A549 (cell line): ENCODE measurements at regions of chr1 and their contacts with region 1.

Region 1: GRCh38 chr1:153532769-153533599 is 2.8 kb downstream of the S100A6 start:
- DNase-seq: peak; percentile 91 to 93
- ATAC-seq: peak; percentile 36 to 63
- H3K4me3 ChIP-seq: peak overlapping the region; percentile 68
- H3K27ac ChIP-seq: peak overlapping the region; percentile 98 to 100
- H3K4me1 ChIP-seq: peaks cover 29% of the 10 kb centered on the region
- CTCF ChIP-seq: peak; percentile 92
- EP300 ChIP-seq: no peak
- POLR2A ChIP-seq: peak; percentile 40
- RAD21 ChIP-seq: peak; percentile 87 to 91

Region 2: DNA sequence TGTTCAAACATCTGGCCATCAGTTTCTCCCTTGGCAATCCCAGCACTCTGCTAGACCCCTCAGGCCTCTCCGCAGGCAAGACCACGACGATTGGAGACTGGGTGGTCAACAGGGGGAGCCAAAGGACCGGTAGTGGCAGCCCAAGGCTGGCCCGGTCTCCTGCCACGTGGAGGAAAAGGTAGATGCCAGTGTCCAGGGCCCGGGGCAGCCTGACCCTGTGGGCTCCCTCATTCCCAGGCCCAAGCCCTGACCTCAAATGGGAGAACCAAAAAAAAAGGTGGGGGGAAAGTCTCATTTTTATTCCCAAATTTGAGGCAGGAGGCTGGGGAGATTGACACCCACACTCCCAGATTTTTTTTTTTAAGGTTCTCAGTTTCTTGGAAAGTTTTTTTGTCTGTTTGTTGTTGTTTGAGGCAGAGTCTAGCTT is 22.0 kb before region 1 on chr1:
- CTCF ChIA-PET with region 1: interaction called, 170 read pairs
- POLR2A ChIA-PET with region 1: interaction called, 3 read pairs
- DNase-seq: peak; percentile 84 to 88
- ATAC-seq: peak; percentile 73 to 85
- H3K4me3 ChIP-seq: no peak overlapping the region
- H3K27ac ChIP-seq: peak overlapping the region; percentile 72 to 87
- H3K4me1 ChIP-seq: peaks cover 43% of the 10 kb centered on the region
- CTCF ChIP-seq: peak; percentile 94
- EP300 ChIP-seq: no peak
- POLR2A ChIP-seq: no peak
- RAD21 ChIP-seq: peak; percentile 99 to 100

Region 3: DNA sequence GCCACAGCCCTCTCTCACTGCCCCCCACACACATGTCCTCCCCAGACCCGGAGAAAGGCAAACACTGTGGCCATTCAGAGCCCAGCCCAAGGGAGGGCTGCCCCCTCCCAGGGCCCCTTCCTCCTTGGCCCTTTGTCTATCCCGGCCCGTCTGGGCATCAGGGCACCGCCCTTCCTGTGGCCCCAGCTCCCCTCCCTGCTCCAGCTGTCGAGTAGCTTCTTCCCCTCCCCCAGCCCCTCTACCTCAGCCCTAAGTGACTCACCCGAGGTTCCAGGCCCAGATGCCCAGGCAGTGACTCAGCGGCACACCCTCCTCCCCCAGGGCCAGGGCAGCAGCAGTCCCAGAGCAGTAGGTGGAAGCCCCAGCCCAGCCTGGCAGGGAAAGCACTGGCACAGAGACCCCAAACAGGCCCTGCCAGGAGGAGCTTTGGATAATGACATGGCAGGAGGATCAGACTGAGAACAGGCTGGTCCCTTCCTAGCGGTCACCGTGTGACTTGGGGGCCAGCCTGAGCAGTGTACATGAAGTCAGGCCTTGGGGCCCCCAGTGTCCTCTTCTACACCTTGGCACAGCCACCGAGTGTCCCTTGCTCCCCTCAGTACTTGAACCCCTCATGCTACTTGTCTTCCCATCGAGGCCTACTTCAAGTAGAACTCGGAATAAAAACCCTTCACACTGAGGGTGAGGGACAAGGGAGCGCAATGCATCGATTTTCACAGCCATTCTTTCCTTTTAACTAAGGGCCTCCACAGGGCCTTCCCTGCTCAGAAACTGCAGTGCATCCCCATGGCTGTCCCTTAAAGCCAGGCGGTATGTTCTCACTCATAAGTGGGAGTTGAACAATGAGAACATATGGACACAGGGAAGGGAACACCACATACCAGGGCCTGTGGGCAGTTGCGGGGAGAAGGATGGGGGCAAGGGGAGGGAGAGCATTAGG is 33.7 kb after region 1 on chr1:
- CTCF ChIA-PET with region 1: interaction called, 471 read pairs
- POLR2A ChIA-PET with region 1: interaction called, 102 read pairs
- DNase-seq: peak; percentile 99
- ATAC-seq: peak; percentile 82 to 89
- H3K4me3 ChIP-seq: peak overlapping the region; percentile 15; the same call in 1 of the 3 replicates
- H3K27ac ChIP-seq: peak overlapping the region; percentile 97 to 100
- H3K4me1 ChIP-seq: peaks cover 57% of the 10 kb centered on the region
- CTCF ChIP-seq: no peak
- EP300 ChIP-seq: peak; percentile 75 to 85; a peak in 3 of 5 replicates
- POLR2A ChIP-seq: no peak
- RAD21 ChIP-seq: peak; percentile 30 to 58; a peak in 4 of 5 replicates

Region 4: GRCh38 chr1:153617675-153618074 is 84.7 kb after region 1 on chr1:
- CTCF ChIA-PET with region 1: interaction called, 11 read pairs
- POLR2A ChIA-PET with region 1: interaction called, 4 read pairs
- DNase-seq: no peak
- ATAC-seq: no peak
- H3K4me3 ChIP-seq: no peak overlapping the region
- H3K27ac ChIP-seq: no peak overlapping the region
- H3K4me1 ChIP-seq: peaks cover 27% of the 10 kb centered on the region
- CTCF ChIP-seq: no peak
- EP300 ChIP-seq: no peak
- POLR2A ChIP-seq: no peak
- RAD21 ChIP-seq: no peak

Region 5: GRCh38 chr1:153639280-153639679 is 106.3 kb after region 1 on chr1:
- CTCF ChIA-PET with region 1: interaction called, 22 read pairs
- POLR2A ChIA-PET with region 1: interaction called, 20 read pairs
- DNase-seq: no peak
- ATAC-seq: no peak
- H3K4me3 ChIP-seq: no peak overlapping the region
- H3K27ac ChIP-seq: no peak overlapping the region
- H3K4me1 ChIP-seq: peaks cover 24% of the 10 kb centered on the region
- CTCF ChIP-seq: no peak
- EP300 ChIP-seq: no peak
- POLR2A ChIP-seq: no peak
- RAD21 ChIP-seq: no peak

Region 6: GRCh38 chr1:153705485-153705884 is 172.5 kb after region 1 on chr1:
- CTCF ChIA-PET with region 1: no interaction called
- POLR2A ChIA-PET with region 1: no interaction called
- DNase-seq: no peak
- ATAC-seq: no peak
- H3K4me3 ChIP-seq: no peak overlapping the region
- H3K27ac ChIP-seq: no peak overlapping the region
- H3K4me1 ChIP-seq: peaks cover 10% of the 10 kb centered on the region; the same call in 2 of the 3 replicates
- CTCF ChIP-seq: no peak
- EP300 ChIP-seq: no peak
- POLR2A ChIP-seq: no peak
- RAD21 ChIP-seq: no peak

Region 7: GRCh38 chr1:154141240-154141639 is 608.3 kb after region 1 on chr1:
- CTCF ChIA-PET with region 1: no interaction called
- POLR2A ChIA-PET with region 1: no interaction called
- DNase-seq: no peak
- ATAC-seq: no peak
- H3K4me3 ChIP-seq: no peak overlapping the region
- H3K27ac ChIP-seq: no peak overlapping the region
- H3K4me1 ChIP-seq: no peaks in the 10 kb centered on the region
- CTCF ChIP-seq: no peak
- EP300 ChIP-seq: no peak
- POLR2A ChIP-seq: no peak
- RAD21 ChIP-seq: no peak